GM18951 (cell line): ENCODE measurements at regions of chr7 and their contacts with region 1.

Region 1: GRCh38 chr7:2709553-2710285 is 21.7 kb downstream of the AMZ1 start:
- POLR2A ChIP-seq: peak; percentile 16

Region 2: DNA sequence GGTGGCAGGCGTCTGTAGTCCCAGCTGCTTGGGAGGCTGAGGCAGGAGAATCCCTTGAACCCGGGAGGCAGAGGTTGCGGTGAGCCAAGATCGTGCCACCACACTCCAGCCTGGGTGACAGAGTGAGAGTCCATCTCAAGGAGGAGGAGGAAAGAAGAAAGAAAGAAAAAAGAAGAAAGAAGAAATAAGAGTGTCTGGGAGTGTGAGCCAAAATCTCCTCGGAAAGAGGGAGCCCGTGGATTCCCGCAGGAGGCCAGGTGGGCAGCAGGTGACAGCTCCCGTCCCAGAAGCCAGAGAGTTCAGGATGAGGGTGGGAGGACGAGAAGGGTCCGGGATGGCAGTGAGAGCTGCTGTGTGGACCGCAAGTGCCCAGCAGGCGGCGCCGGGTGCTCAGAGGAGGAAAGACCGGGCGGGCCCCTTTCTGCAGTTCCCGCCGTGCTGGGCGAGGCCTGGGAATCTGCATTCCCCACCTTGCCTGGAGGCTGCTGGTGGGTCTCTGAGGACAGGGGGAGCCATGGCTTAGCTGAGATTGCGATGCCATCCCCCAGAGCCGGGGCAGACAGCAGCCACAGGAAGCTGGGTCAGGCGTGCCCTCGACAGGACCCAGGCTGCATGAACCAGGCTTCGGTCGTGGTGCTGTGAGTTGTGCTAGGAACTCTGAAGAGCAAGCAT is 38.9 kb before region 1 on chr7:
- in situ Hi-C with region 1: loop called (anchors 5 kb)
- POLR2A ChIP-seq: no peak